ENCODE measurements at regions of chr2 and their contacts with region 1.

Region 1: DNA sequence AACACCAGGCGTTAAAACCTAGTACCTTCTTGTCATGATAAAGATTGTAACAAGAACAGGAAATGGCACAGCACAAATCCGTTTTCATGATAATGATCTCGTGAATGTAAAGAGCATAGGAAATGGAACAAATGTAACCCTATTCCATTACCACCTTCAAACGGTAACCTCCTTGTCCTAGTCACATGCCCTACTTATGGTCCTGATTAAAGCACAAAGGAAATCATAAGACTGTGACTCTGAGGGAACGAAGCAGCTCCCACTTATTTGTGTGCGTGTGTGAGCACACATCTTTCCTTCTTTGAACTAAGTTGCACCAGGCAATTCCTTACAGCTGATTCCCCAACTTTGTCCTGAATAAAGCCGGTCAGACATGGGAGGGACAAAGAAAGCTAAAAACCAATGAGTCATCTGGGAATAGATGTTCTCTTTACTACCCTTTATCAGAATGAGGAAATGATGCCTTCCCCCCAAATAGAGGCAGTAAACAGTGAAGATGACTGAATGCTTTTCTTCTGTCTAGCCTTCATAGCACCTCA is 192.6 kb downstream of the IKZF2 start:
- DNase-seq: peak in 2 of 9 experiments; percentile 30 to 43
- ATAC-seq: peak; percentile 55
- H3K4me3 ChIP-seq: no peak overlapping the region
- H3K4me3 Mint-ChIP-seq: peak overlapping the region; percentile 65
- H3K27ac ChIP-seq: peak overlapping the region in 1 of 2 experiments; percentile 11
- H3K27ac Mint-ChIP-seq: peak overlapping the region; percentile 75
- H3K4me1 ChIP-seq: peaks cover 3% of the 10 kb centered on the region
- H3K4me1 Mint-ChIP-seq: peaks cover 45% of the 10 kb centered on the region
- H3K27me3 ChIP-seq: no peaks in the 10 kb centered on the region
- H3K27me3 Mint-ChIP-seq: no peaks in the 10 kb centered on the region
- CTCF ChIP-seq: no peak

Region 2: GRCh38 chr2:213157242-213157641 is 198.4 kb after region 1 on chr2:
- CTCF ChIA-PET with region 1: no interaction called
- POLR2A ChIA-PET with region 1: no interaction called
- intact Hi-C with region 1: loop called (anchors 5 kb)
- DNase-seq: peak in 3 of 9 experiments; percentile 42 to 73 (median 51)
- ATAC-seq: peak; percentile 75
- H3K4me3 ChIP-seq: no peak overlapping the region
- H3K4me3 Mint-ChIP-seq: no peak overlapping the region
- H3K27ac ChIP-seq: no peak overlapping the region
- H3K27ac Mint-ChIP-seq: peak overlapping the region; percentile 11
- H3K4me1 ChIP-seq: peaks cover 11% of the 10 kb centered on the region
- H3K4me1 Mint-ChIP-seq: peaks cover 19% of the 10 kb centered on the region
- H3K27me3 ChIP-seq: no peaks in the 10 kb centered on the region
- H3K27me3 Mint-ChIP-seq: no peaks in the 10 kb centered on the region
- CTCF ChIP-seq: no peak